ENCODE measurements at regions of chr21 and their contacts with region 1.

Region 1: GRCh38 chr21:29085106-29085752 is 11.8 kb upstream of the CCT8 start:
- DNase-seq: no peak
- H3K4me3 ChIP-seq: peak overlapping the region in 1 of 2 donors; percentile 9
- H3K27ac ChIP-seq: peak overlapping the region in 1 of 2 donors; percentile 6
- H3K4me1 ChIP-seq: peaks cover 0 to 9% of the 10 kb centered on the region in 2 donors
- H3K27me3 ChIP-seq: no peaks in the 10 kb centered on the region
- CTCF ChIP-seq: no peak

Region 2: GRCh38 chr21:29351691-29352090 is 266.5 kb after region 1 on chr21:
- intact Hi-C with region 1: loop called (anchors 5 kb)
- DNase-seq: no peak
- H3K4me3 ChIP-seq: no peak overlapping the region
- H3K27ac ChIP-seq: peak overlapping the region; percentile 50 to 60
- H3K4me1 ChIP-seq: peaks cover 0 to 23% of the 10 kb centered on the region in 2 donors
- H3K27me3 ChIP-seq: no peaks in the 10 kb centered on the region
- CTCF ChIP-seq: no peak